Natural killer cell (primary cell): ENCODE measurements at regions of chr5 and their contacts with region 1.

Region 1: DNA sequence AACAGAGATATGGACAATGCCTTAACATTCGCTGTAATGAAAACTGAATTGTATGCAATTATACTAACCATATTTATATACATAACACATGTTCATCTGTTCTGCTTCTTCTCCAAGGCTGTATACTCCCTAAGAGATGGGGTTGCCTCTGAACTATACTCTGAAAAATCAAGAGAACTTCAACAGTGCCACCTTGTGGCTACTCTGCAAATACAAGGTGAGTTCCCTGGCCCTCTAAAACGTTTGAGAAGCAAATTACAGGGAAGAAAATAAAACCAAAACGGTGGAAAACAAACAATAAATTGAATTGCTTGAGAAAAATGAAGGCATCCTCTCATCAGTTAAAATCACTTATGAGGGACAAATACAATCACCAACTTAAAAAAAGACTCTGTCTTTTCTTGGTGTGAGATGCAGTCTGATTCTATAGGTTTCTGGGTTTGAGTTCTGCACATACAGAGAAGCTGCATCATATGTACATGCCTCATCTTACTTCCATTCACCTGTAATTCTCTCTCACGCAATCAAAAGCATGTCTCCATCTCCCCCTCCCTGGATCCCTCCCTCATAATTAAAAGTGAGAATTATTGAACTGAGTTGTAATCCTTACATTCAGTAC is 98.6 kb downstream of the FBXW11 start:
- DNase-seq: peak in 1 of 2 donors; percentile 76
- ATAC-seq: peak; percentile 81 to 84 (median 82)
- H3K4me3 ChIP-seq: no peak overlapping the region
- H3K4me3 Mint-ChIP-seq: no peak overlapping the region
- H3K27ac ChIP-seq: no peak overlapping the region
- H3K27ac Mint-ChIP-seq: no peak overlapping the region
- H3K4me1 ChIP-seq: no peaks in the 10 kb centered on the region
- H3K4me1 Mint-ChIP-seq: peaks cover 40 to 49% of the 10 kb centered on the region in 2 donors
- H3K27me3 ChIP-seq: no peaks in the 10 kb centered on the region
- H3K27me3 Mint-ChIP-seq: no peaks in the 10 kb centered on the region
- CTCF ChIP-seq: peak; percentile 81

Region 2: GRCh38 chr5:171207256-171207847 is 700.5 kb before region 1 on chr5:
- intact Hi-C with region 1: loop called (anchors 5 kb)
- DNase-seq: peak in 1 of 2 donors; percentile 54
- ATAC-seq: peak in 1 of 3 donors; percentile 49
- H3K4me3 ChIP-seq: no peak overlapping the region
- H3K4me3 Mint-ChIP-seq: no peak overlapping the region
- H3K27ac ChIP-seq: no peak overlapping the region
- H3K27ac Mint-ChIP-seq: no peak overlapping the region
- H3K4me1 ChIP-seq: no peaks in the 10 kb centered on the region
- H3K4me1 Mint-ChIP-seq: peaks cover 0 to 4% of the 10 kb centered on the region in 2 donors
- H3K27me3 ChIP-seq: peaks cover 3% of the 10 kb centered on the region
- H3K27me3 Mint-ChIP-seq: peaks cover 0 to 8% of the 10 kb centered on the region in 2 donors
- CTCF ChIP-seq: peak; percentile 82

Region 3: DNA sequence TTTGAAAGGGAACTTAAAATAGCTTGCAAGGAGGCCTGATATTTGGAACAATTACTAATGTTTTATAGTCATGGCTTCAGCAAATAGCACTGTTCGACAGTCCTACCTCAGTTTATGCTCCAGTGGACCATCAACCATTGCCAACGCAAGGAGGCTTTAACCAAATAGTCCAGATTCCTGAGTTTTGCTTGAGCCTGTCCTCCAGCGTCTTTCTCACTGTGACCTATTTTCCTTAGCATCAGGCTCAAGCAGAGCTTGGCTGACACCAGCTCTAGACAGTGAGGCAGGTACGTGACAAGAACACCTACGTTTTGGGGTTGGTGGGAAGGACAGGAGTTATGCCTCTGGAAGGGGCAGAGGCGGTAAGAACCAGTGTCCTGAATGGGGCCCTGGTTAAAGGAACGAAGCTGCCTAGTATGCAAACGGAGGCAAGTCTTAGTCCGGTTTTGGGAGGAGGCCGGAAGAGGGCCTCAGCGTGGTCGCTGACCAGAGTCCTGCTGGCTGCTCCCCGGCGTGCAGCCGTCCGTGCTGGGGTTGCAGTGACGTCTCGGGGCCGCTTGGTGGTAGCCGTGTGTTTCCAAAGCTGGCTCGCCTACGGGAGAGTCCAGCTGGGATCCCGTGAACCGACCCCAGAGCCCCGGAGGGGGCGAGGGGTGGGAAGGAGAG is 489.4 kb before region 1 on chr5:
- intact Hi-C with region 1: loop called (anchors 2 kb)
- DNase-seq: peak; percentile 26 to 64
- ATAC-seq: peak; percentile 67 to 72 (median 71)
- H3K4me3 ChIP-seq: peak overlapping the region; percentile 32
- H3K4me3 Mint-ChIP-seq: peak overlapping the region; percentile 88
- H3K27ac ChIP-seq: no peak overlapping the region
- H3K27ac Mint-ChIP-seq: peak overlapping the region in 1 of 2 donors; percentile 20
- H3K4me1 ChIP-seq: peaks cover 22% of the 10 kb centered on the region
- H3K4me1 Mint-ChIP-seq: peaks cover 6 to 20% of the 10 kb centered on the region in 2 donors
- H3K27me3 ChIP-seq: peaks cover 16% of the 10 kb centered on the region
- H3K27me3 Mint-ChIP-seq: peaks cover 0 to 15% of the 10 kb centered on the region in 2 donors
- CTCF ChIP-seq: peak; percentile 59

Region 4: GRCh38 chr5:171484460-171484899 is 423.4 kb before region 1 on chr5:
- intact Hi-C with region 1: loop called (anchors 5 kb)
- DNase-seq: peak; percentile 37 to 62
- ATAC-seq: peak in 2 of 3 donors; percentile 47 to 69
- H3K4me3 ChIP-seq: no peak overlapping the region
- H3K4me3 Mint-ChIP-seq: no peak overlapping the region
- H3K27ac ChIP-seq: no peak overlapping the region
- H3K27ac Mint-ChIP-seq: no peak overlapping the region
- H3K4me1 ChIP-seq: peaks cover 4% of the 10 kb centered on the region
- H3K4me1 Mint-ChIP-seq: peaks cover 0 to 13% of the 10 kb centered on the region in 2 donors
- H3K27me3 ChIP-seq: no peaks in the 10 kb centered on the region
- H3K27me3 Mint-ChIP-seq: peaks cover 8 to 10% of the 10 kb centered on the region in 2 donors
- CTCF ChIP-seq: peak; percentile 76

Region 5: DNA sequence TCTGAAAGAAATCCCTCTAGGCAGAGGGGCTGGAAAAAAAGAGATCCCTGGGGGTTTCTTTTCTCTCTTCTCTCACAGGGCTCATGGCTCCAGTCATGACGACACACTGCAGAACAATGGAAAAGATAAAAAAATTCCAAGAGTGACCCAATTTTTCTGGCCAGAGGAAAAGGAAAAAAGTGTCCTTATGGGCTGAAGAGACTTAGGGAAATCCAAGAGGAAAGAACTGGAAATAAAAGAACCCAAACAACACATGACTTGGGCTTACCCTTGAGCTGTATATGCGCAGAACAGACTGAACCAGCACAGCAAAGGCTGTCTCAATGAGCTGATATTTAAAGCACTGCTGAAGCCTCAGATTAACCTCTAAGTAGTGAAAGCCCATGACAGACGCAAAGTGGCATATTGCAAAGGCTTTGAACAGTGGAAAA is 19.8 kb before region 1 on chr5:
- intact Hi-C with region 1: no loop called
- DNase-seq: no peak
- ATAC-seq: no peak
- H3K4me3 ChIP-seq: no peak overlapping the region
- H3K4me3 Mint-ChIP-seq: no peak overlapping the region
- H3K27ac ChIP-seq: no peak overlapping the region
- H3K27ac Mint-ChIP-seq: no peak overlapping the region
- H3K4me1 ChIP-seq: no peaks in the 10 kb centered on the region
- H3K4me1 Mint-ChIP-seq: peaks cover 0 to 4% of the 10 kb centered on the region in 2 donors
- H3K27me3 ChIP-seq: no peaks in the 10 kb centered on the region
- H3K27me3 Mint-ChIP-seq: no peaks in the 10 kb centered on the region
- CTCF ChIP-seq: no peak

Region 6: DNA sequence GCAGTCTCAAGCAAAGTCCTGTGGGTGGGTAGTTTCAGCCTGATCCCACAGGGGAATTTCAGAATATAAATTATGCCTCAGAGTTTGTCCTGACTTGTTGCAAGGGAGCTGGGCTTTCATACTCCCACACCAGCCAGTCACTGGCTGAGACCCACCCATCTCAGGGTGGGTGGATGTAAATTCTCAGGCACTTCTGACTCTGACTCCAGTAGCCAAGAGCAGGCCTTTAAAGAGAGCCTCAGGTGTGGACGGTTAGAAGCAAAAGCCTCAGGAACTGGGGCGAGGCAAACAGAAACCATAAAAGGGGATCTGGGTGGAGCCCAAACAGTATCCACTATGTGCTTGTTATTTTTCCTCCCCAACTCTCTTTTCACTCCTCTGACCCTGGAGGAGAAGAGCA is 127.2 kb after region 1 on chr5:
- intact Hi-C with region 1: loop called (anchors 1 kb)
- DNase-seq: no peak
- ATAC-seq: no peak
- H3K4me3 ChIP-seq: no peak overlapping the region
- H3K4me3 Mint-ChIP-seq: no peak overlapping the region
- H3K27ac ChIP-seq: no peak overlapping the region
- H3K27ac Mint-ChIP-seq: no peak overlapping the region
- H3K4me1 ChIP-seq: peaks cover 5% of the 10 kb centered on the region
- H3K4me1 Mint-ChIP-seq: peaks cover 16 to 18% of the 10 kb centered on the region in 2 donors
- H3K27me3 ChIP-seq: no peaks in the 10 kb centered on the region
- H3K27me3 Mint-ChIP-seq: no peaks in the 10 kb centered on the region
- CTCF ChIP-seq: no peak

Region 7: DNA sequence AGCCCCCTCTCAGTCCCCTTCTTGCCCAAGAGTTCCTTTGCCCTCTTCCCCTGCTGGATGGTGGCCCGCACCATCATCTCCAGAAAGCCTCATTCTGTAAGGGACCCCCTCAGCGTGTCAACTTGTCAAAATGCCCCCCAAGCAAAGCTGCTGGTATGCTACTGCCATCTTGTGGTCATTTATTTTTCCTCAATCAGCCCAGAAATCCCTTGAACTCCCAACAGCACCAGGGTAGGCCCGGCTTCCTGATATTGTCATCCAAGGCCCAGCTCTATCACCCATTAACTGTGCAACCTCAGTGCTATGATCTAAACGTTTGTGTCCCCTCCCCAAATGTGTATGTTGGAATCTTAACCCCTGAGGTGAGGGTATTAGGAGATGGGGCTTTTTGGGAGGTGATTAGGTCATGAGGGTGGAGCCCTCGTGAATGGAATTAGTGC is 151.8 kb after region 1 on chr5:
- intact Hi-C with region 1: loop called (anchors 5 kb)
- DNase-seq: peak in 1 of 2 donors; percentile 54
- ATAC-seq: peak in 2 of 3 donors; percentile 27 to 34
- H3K4me3 ChIP-seq: no peak overlapping the region
- H3K4me3 Mint-ChIP-seq: no peak overlapping the region
- H3K27ac ChIP-seq: no peak overlapping the region
- H3K27ac Mint-ChIP-seq: peak overlapping the region; percentile 86 to 87
- H3K4me1 ChIP-seq: no peaks in the 10 kb centered on the region
- H3K4me1 Mint-ChIP-seq: peaks cover 22 to 44% of the 10 kb centered on the region in 2 donors
- H3K27me3 ChIP-seq: no peaks in the 10 kb centered on the region
- H3K27me3 Mint-ChIP-seq: no peaks in the 10 kb centered on the region
- CTCF ChIP-seq: peak; percentile 45

Region 8: GRCh38 chr5:172235132-172235780 is 327.4 kb after region 1 on chr5:
- intact Hi-C with region 1: no loop called
- DNase-seq: no peak
- ATAC-seq: no peak
- H3K4me3 ChIP-seq: no peak overlapping the region
- H3K4me3 Mint-ChIP-seq: no peak overlapping the region
- H3K27ac ChIP-seq: no peak overlapping the region
- H3K27ac Mint-ChIP-seq: no peak overlapping the region
- H3K4me1 ChIP-seq: no peaks in the 10 kb centered on the region
- H3K4me1 Mint-ChIP-seq: peaks cover 7 to 18% of the 10 kb centered on the region in 2 donors
- H3K27me3 ChIP-seq: no peaks in the 10 kb centered on the region
- H3K27me3 Mint-ChIP-seq: no peaks in the 10 kb centered on the region
- CTCF ChIP-seq: no peak

Region 9: DNA sequence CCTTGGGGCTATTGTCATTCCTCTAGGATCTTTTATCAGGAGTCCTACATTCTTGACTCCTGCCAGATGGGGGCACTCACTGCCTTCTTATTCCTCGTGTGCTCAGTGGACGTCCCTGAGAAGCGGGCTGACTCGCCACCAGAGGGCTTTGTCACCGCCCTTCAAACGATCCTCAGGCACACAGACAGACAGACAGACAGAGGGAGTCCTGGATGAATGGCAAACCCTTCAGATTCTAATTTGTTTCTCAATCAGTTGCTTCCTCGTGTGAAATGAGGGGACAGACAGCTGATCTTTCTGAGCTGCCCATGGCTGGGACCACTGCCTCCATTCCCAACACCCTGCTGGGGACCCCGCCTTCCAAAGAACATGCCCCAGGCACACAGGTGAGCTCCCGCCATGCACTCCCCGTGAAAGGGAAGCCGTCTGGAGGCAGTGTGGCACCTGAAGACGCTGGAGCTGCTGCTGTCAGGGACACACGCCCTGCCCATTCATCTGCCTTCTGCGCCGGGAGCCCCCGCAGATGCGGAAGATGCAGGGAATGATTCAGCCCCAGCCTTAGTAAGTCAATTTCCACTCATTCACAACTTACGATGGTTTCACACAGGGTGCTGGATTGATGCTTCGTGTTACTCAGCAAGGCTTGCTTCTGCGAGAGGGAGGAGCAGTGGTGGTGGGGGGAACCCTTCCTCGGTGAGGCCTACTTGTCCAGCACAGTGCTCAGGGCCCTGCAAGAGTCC is 571.4 kb after region 1 on chr5:
- intact Hi-C with region 1: no loop called
- DNase-seq: peak; percentile 27 to 78
- ATAC-seq: peak; percentile 67 to 94 (median 78)
- H3K4me3 ChIP-seq: no peak overlapping the region
- H3K4me3 Mint-ChIP-seq: no peak overlapping the region
- H3K27ac ChIP-seq: no peak overlapping the region
- H3K27ac Mint-ChIP-seq: no peak overlapping the region
- H3K4me1 ChIP-seq: no peaks in the 10 kb centered on the region
- H3K4me1 Mint-ChIP-seq: no peaks in the 10 kb centered on the region
- H3K27me3 ChIP-seq: no peaks in the 10 kb centered on the region
- H3K27me3 Mint-ChIP-seq: peaks cover 0 to 9% of the 10 kb centered on the region in 2 donors
- CTCF ChIP-seq: peak; percentile 27